ENCODE measurements at regions of chr3 and their contacts with region 1.

Region 1: GRCh38 chr3:46998121-46998851 is 18.8 kb downstream of the NBEAL2 start:
- DNase-seq: peak; percentile 91
- H3K4me3 Mint-ChIP-seq: no peak overlapping the region
- H3K27ac Mint-ChIP-seq: peak overlapping the region; percentile 45
- H3K4me1 Mint-ChIP-seq: peaks cover 10% of the 10 kb centered on the region
- H3K27me3 Mint-ChIP-seq: no peaks in the 10 kb centered on the region

Region 2: GRCh38 chr3:46923559-46924350 is 74.5 kb before region 1 on chr3:
- intact Hi-C with region 1: loop called (anchors 2 kb)
- DNase-seq: peak; percentile 80
- H3K4me3 Mint-ChIP-seq: no peak overlapping the region
- H3K27ac Mint-ChIP-seq: peak overlapping the region; percentile 80
- H3K4me1 Mint-ChIP-seq: peaks cover 28% of the 10 kb centered on the region
- H3K27me3 Mint-ChIP-seq: no peaks in the 10 kb centered on the region

Measured in activated CD4-positive, alpha-beta T cell treated with anti-CD3 and anti-CD28 coated beads, Interleukin-2, amount 10 ng/mL, durations not matched to agents 24 days and 14 days (primary cell).